Ascending aorta (tissue), 2 donors: ENCODE measurements at regions of chr20 and their contacts with region 1.

Region 1: GRCh38 chr20:44074252-44075151 is 112.5 kb downstream of the JPH2 start:
- DNase-seq: peak in 1 of 2 donors; percentile 63
- H3K4me3 ChIP-seq: no peak overlapping the region
- H3K27ac ChIP-seq: peak overlapping the region; percentile 13 to 63
- H3K4me1 ChIP-seq: no peaks in the 10 kb centered on the region
- H3K27me3 ChIP-seq: no peaks in the 10 kb centered on the region
- CTCF ChIP-seq: no peak

Region 2: GRCh38 chr20:44018259-44018941 is 56.1 kb before region 1 on chr20:
- intact Hi-C with region 1: loop called (anchors 5 kb)
- DNase-seq: peak; percentile 31 to 83
- H3K4me3 ChIP-seq: peak overlapping the region in 1 of 2 donors; percentile 47
- H3K27ac ChIP-seq: peak overlapping the region; percentile 65 to 70
- H3K4me1 ChIP-seq: peaks cover 11 to 20% of the 10 kb centered on the region in 2 donors
- H3K27me3 ChIP-seq: no peaks in the 10 kb centered on the region
- CTCF ChIP-seq: no peak